ENCODE measurements at regions of chr17 and their contacts with region 1.

Region 1: DNA sequence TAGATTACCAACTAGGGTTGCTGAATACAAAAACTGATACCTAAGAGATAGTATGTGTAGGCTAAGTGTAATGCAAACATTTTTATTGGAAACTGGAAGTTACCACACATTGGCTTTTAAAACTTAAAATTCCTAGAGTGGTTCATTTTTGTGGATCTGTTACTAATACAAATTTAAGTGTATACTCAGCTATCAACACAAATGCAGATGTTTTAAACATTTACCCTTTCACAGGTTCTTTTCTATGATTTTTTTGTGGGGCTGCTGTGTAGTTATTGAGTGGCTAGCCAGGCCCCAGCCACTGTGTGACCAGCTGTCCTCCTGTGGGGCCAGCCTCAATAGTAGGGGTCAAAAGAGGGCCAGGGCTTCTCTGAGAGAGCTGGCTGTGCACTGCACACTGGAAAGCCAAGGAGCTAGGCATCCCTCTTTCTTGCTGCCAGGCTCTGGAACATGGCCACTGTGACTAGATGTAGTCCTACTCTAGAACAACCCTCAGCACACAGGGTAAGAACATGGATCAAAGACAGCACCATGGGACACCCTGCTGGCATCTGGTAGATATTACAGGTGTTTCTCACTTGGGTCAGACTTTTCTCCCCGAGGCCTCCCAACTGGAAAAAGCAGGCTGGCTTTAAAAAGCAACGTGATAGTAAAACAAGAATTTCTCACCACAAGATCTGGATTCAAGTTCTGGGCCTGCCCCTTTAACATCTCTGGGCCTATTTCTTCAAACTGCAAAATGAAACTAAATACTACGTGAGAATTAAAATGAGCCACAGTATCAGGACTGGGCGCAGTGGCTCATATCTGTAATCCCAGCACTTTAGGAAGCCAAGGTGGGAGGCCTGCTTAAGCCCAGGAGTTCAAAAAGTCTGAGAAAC is 7.3 kb upstream of the VEZF1 start:
- DNase-seq: peak in 1 of 2 donors; percentile 62
- H3K4me3 ChIP-seq: no peak overlapping the region
- CTCF ChIP-seq: no peak
- POLR2A ChIP-seq: no peak

Region 2: DNA sequence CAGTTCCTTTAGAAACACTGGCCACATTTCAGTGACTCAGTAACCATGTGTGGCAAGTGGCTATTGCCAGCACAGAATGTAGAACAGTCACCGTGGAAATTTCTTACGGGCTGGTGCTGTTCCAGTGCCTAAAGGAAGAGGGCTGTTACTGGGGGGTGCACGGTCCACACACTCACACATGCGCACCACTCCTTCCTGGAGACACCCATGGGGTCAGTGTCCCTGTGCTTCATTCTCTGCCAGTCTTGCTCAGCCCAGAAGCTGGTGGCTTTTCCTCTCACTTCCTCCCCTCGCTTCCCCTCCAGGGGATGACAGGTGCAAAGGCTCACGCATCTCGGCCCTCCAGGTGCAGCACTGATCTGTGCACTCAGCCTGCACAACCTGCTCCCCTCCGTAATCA is 365.8 kb before region 1 on chr17:
- intact Hi-C with region 1: no loop called
- DNase-seq: no peak
- H3K4me3 ChIP-seq: no peak overlapping the region
- CTCF ChIP-seq: no peak
- POLR2A ChIP-seq: no peak

Region 3: GRCh38 chr17:57861000-57861789 is 134.1 kb before region 1 on chr17:
- intact Hi-C with region 1: loop called (anchors 5 kb)
- DNase-seq: no peak
- H3K4me3 ChIP-seq: peak overlapping the region; percentile 24
- CTCF ChIP-seq: no peak
- POLR2A ChIP-seq: no peak

Region 4: DNA sequence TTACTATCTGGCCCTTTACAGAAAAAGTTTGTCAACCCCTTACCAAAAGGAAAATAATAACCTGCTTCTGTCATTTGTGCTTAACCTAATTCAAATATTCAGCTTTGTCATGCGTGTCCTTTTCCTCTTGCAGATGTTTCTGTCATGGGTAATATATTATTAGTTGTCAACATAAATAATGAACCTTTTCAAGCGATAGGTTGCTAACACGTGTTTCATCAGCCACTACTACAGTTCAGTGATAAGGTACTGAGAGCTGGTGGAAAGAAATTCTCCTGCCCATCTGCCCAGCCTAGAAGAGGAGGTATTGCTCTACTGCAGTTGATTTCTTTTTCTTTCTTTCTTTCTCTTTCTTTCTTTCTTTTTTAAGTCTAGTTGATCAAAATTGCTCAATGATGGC is 23.7 kb after region 1 on chr17:
- intact Hi-C with region 1: no loop called
- DNase-seq: no peak
- H3K4me3 ChIP-seq: no peak overlapping the region
- CTCF ChIP-seq: no peak
- POLR2A ChIP-seq: no peak